Naive thymus-derived CD4-positive, alpha-beta T cell (primary cell): ENCODE measurements at regions of chr1 and their contacts with region 1.

Region 1: DNA sequence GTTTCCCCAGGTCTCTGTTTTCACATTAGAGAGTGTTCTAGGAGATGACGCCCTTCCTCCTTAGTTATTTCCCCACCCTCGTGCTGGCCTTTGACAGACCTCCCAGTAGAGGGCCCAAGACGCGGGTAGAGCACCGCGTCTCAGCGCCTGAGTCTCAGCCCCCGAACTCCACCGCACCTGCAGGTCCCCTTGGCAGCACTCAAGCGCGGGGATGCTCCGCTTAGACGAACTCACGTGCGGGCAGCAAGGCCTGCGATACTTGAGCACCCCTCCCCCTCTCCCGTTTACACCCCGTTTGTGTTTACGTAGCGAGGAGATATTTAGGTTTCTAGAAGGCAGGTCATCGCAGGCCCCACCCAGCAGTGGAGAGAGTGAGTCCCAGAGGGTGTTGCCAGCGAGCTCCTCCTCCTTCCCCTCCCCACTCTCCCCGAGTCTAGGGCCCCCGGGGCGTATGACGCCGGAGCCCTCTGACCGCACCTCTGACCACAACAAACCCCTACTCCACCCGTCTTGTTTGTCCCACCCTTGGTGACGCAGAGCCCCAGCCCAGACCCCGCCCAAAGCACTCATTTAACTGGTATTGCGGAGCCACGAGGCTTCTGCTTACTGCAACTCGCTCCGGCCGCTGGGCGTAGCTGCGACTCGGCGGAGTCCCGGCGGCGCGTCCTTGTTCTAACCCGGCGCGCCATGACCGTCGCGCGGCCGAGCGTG is at the start of gene CD55:
- DNase-seq: peak; percentile 92 to 100 (median 100)
- ATAC-seq: peak; percentile 95
- H3K4me3 ChIP-seq: peak within 1 kb of the TSS; percentile 88
- H3K4me3 Mint-ChIP-seq: peak within 1 kb of the TSS; percentile 90 to 99 (median 96)
- H3K27ac ChIP-seq: peak within 1 kb of the TSS; percentile 99
- H3K27ac Mint-ChIP-seq: peak within 1 kb of the TSS; percentile 99 to 100 (median 100)
- H3K4me1 ChIP-seq: peaks cover 6 to 13% of the 10 kb centered on the region in 2 donors
- H3K4me1 Mint-ChIP-seq: peaks cover 25 to 64% (median 50%) of the 10 kb centered on the region in 7 donors
- H3K27me3 ChIP-seq: no peaks in the 10 kb centered on the region
- H3K27me3 Mint-ChIP-seq: peaks cover 0 to 3% (median 0%) of the 10 kb centered on the region in 5 donors
- total RNA-seq, gene CD55: 122 to 264 (median 134) TPM

Region 2: DNA sequence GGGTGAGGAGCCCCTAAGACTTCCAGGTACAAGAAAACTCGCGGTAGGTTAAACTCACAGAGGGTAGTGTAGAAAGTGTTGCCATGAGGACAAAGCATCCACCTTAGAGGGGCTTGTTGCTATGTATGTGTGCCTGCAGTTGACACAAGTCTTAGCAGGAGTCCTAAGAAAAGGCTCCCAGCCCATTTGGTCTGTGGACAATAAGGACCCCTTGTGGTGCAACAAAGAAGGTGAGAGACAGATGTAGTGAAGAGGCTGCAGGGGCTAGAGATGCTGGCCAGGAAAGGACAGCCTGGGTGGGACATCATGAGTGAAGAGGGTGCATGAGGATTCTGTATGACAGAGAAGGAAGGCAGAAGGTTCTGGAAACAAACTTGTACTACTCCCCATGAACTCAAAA is 512.6 kb before region 1 on chr1:
- CTCF ChIA-PET with region 1: no interaction called
- POLR2A ChIA-PET with region 1: no interaction called
- intact Hi-C with region 1: loop called (anchors 1 to 10 kb)
- DNase-seq: peak in 7 of 9 donors; percentile 47 to 71 (median 58)
- ATAC-seq: peak; percentile 90
- H3K4me3 ChIP-seq: no peak overlapping the region
- H3K4me3 Mint-ChIP-seq: peak overlapping the region in 1 of 10 donors; percentile 8
- H3K27ac ChIP-seq: no peak overlapping the region
- H3K27ac Mint-ChIP-seq: peak overlapping the region in 8 of 9 donors; percentile 17 to 76 (median 51)
- H3K4me1 ChIP-seq: peaks cover 30 to 42% of the 10 kb centered on the region in 2 donors
- H3K4me1 Mint-ChIP-seq: peaks cover 24 to 61% (median 52%) of the 10 kb centered on the region in 7 donors
- H3K27me3 ChIP-seq: no peaks in the 10 kb centered on the region
- H3K27me3 Mint-ChIP-seq: peaks cover 0 to 12% (median 0%) of the 10 kb centered on the region in 5 donors

Region 3: DNA sequence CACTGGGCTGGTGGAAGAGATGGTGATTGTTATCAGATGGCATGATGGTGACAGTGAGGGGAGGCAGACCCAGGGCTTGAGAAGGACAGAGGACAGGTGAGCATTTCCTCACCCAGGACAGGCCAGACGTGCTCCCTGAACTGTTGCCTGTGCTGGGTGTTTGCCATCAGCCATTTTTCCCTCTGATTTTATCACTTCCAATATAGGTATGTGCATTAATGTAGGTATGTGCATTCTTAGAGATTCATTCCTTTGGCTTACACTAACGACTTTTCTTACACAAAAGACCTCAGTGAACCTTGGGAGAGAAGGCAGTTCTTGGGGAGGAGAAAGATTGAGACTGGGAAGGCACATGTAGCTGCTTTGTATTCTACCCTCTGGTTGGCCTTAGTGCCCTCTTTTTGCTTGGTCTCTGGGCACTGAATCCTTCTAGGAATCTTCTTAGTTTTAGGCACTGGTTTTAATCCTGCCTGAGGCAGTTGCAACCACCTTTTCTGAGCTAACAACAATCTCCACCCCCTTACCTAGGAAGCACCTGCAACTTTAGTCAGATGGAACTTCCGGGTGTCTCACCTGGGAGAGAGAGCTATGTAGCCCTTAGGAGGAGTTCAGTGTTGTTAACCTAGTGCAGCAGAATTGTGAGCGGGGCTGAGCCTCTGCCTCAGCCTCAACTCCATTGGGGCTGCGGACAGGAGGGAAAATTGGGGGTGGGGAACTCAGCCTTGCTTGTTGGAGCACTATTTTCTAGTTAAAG is 319.6 kb before region 1 on chr1:
- CTCF ChIA-PET with region 1: no interaction called
- POLR2A ChIA-PET with region 1: no interaction called
- intact Hi-C with region 1: no loop called
- DNase-seq: no peak
- ATAC-seq: no peak
- H3K4me3 ChIP-seq: no peak overlapping the region
- H3K4me3 Mint-ChIP-seq: no peak overlapping the region
- H3K27ac ChIP-seq: no peak overlapping the region
- H3K27ac Mint-ChIP-seq: no peak overlapping the region
- H3K4me1 ChIP-seq: no peaks in the 10 kb centered on the region
- H3K4me1 Mint-ChIP-seq: peaks cover 0 to 8% (median 4%) of the 10 kb centered on the region in 7 donors
- H3K27me3 ChIP-seq: no peaks in the 10 kb centered on the region
- H3K27me3 Mint-ChIP-seq: peaks cover 0 to 30% (median 6%) of the 10 kb centered on the region in 5 donors

Region 4: DNA sequence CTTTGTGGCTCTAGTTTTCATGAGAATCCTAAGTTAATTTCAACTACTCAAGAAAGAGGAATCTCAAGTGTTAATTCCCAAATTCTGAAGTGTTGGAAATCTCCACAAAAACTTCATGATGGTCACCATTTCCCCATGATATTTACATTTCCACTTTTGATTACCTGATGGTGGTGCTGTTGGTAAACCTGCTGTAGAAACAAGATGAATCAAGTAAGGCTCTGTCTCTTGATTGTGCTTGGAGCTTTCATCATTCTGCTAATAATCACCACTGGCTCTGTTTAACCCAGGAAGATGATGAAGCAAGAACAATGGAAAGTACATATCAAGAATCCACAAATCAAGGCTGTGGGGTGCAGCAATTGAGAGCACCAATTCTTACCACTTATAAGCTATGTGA is 139.4 kb before region 1 on chr1:
- CTCF ChIA-PET with region 1: interaction called, 3 read pairs
- POLR2A ChIA-PET with region 1: interaction called, 6 read pairs
- intact Hi-C with region 1: loop called (anchors 1 to 5 kb)
- DNase-seq: peak in 5 of 9 donors; percentile 5 to 35 (median 10)
- ATAC-seq: no peak
- H3K4me3 ChIP-seq: no peak overlapping the region
- H3K4me3 Mint-ChIP-seq: no peak overlapping the region
- H3K27ac ChIP-seq: no peak overlapping the region
- H3K27ac Mint-ChIP-seq: no peak overlapping the region
- H3K4me1 ChIP-seq: no peaks in the 10 kb centered on the region
- H3K4me1 Mint-ChIP-seq: peaks cover 0 to 5% (median 0%) of the 10 kb centered on the region in 7 donors
- H3K27me3 ChIP-seq: no peaks in the 10 kb centered on the region
- H3K27me3 Mint-ChIP-seq: peaks cover 0 to 39% (median 9%) of the 10 kb centered on the region in 5 donors

Region 5: GRCh38 chr1:207251066-207251465 is 70.2 kb before region 1 on chr1:
- CTCF ChIA-PET with region 1: no interaction called
- POLR2A ChIA-PET with region 1: no interaction called
- intact Hi-C with region 1: no loop called
- DNase-seq: no peak
- ATAC-seq: no peak
- H3K4me3 ChIP-seq: no peak overlapping the region
- H3K4me3 Mint-ChIP-seq: no peak overlapping the region
- H3K27ac ChIP-seq: no peak overlapping the region
- H3K27ac Mint-ChIP-seq: no peak overlapping the region
- H3K4me1 ChIP-seq: no peaks in the 10 kb centered on the region
- H3K4me1 Mint-ChIP-seq: peaks cover 0 to 18% (median 5%) of the 10 kb centered on the region in 7 donors
- H3K27me3 ChIP-seq: no peaks in the 10 kb centered on the region
- H3K27me3 Mint-ChIP-seq: peaks cover 0 to 13% (median 0%) of the 10 kb centered on the region in 5 donors

Region 6: DNA sequence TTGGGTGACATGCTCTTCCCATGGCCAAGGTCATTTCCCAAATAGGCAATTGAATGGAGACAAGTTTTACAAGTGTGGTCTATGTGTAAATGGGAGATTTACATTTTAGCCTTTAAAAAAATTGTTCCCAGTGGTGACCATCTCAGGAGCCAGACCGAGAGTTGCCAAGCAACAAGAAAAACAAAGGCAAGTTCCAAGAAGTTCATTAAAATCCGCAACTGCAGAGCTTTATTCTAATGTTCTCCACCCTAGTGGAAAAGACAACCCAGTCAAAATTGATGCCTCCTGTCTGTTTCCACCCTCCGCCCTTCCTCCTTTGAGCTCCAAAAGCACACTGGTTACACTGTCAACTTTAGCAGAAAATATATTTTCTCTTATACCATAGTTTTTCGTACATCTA is 32.9 kb before region 1 on chr1:
- CTCF ChIA-PET with region 1: no interaction called
- POLR2A ChIA-PET with region 1: interaction called, 95 read pairs
- intact Hi-C with region 1: loop called in 1 of 2 experiments (anchors 1 kb)
- DNase-seq: no peak
- ATAC-seq: no peak
- H3K4me3 ChIP-seq: no peak overlapping the region
- H3K4me3 Mint-ChIP-seq: no peak overlapping the region
- H3K27ac ChIP-seq: no peak overlapping the region
- H3K27ac Mint-ChIP-seq: peak overlapping the region in 2 of 9 donors; percentile 17 to 70
- H3K4me1 ChIP-seq: peaks cover 0 to 10% of the 10 kb centered on the region in 2 donors
- H3K4me1 Mint-ChIP-seq: peaks cover 4 to 35% (median 26%) of the 10 kb centered on the region in 7 donors
- H3K27me3 ChIP-seq: no peaks in the 10 kb centered on the region
- H3K27me3 Mint-ChIP-seq: peaks cover 0 to 10% (median 0%) of the 10 kb centered on the region in 5 donors

Region 7: GRCh38 chr1:207362962-207363858 is 42.0 kb after region 1 on chr1:
- CTCF ChIA-PET with region 1: no interaction called
- POLR2A ChIA-PET with region 1: interaction called, 9 read pairs
- intact Hi-C with region 1: loop called (anchors 1 kb)
- DNase-seq: peak in 7 of 9 donors; percentile 24 to 66 (median 38)
- ATAC-seq: peak; percentile 92
- H3K4me3 ChIP-seq: no peak overlapping the region
- H3K4me3 Mint-ChIP-seq: no peak overlapping the region
- H3K27ac ChIP-seq: peak overlapping the region; percentile 20
- H3K27ac Mint-ChIP-seq: no peak overlapping the region
- H3K4me1 ChIP-seq: peaks cover 0 to 5% of the 10 kb centered on the region in 2 donors
- H3K4me1 Mint-ChIP-seq: peaks cover 0 to 14% (median 10%) of the 10 kb centered on the region in 7 donors
- H3K27me3 ChIP-seq: no peaks in the 10 kb centered on the region
- H3K27me3 Mint-ChIP-seq: no peaks in the 10 kb centered on the region

Region 8: DNA sequence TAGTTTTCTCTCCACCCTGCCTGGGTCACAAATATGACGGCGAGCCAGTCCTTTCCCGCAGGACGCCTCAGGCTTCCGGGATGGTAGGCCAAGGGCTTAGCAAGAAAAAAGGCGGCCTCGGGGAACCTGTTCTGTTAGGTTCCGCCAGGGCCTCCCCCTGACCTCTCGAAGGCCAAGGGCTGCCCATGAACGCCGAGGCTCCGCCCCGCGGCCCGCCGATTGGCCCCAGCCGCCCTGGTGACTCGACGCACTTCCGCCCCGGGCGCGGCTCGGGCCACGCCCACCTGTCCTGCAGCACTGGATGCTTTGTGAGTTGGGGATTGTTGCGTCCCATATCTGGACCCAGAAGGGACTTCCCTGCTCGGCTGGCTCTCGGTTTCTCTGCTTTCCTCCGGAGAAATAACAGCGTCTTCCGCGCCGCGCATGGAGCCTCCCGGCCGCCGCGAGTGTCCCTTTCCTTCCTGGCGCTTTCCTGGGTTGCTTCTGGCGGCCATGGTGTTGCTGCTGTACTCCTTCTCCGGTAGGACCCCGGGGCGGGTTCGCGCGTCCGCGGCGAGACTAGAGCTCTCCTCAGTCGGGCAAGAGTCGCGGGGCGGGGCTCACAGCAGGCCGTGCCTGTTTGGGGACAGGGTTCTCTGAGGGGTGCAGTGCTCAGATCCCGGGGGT is 430.7 kb after region 1 on chr1 and contains the start of gene CD46:
- CTCF ChIA-PET with region 1: no interaction called
- POLR2A ChIA-PET with region 1: no interaction called
- intact Hi-C with region 1: loop called in 1 of 2 experiments (anchors 1 kb)
- DNase-seq: peak; percentile 88 to 95 (median 90)
- ATAC-seq: peak; percentile 99
- H3K4me3 ChIP-seq: peak within 1 kb of the TSS; percentile 92
- H3K4me3 Mint-ChIP-seq: peak within 1 kb of the TSS; percentile 94 to 100 (median 99)
- H3K27ac ChIP-seq: peak within 1 kb of the TSS; percentile 90
- H3K27ac Mint-ChIP-seq: peak within 1 kb of the TSS; percentile 96 to 99 (median 97)
- H3K4me1 ChIP-seq: peaks cover 27 to 50% of the 10 kb centered on the region in 2 donors
- H3K4me1 Mint-ChIP-seq: peaks cover 49 to 93% (median 86%) of the 10 kb centered on the region in 7 donors
- H3K27me3 ChIP-seq: no peaks in the 10 kb centered on the region
- H3K27me3 Mint-ChIP-seq: peaks cover 0 to under 1% (median 0%) of the 10 kb centered on the region in 5 donors
- total RNA-seq, gene CD46: 121 to 216 (median 127) TPM